H1 (cell line): ENCODE measurements at regions of chr15 and their contacts with region 1.

Region 1: DNA sequence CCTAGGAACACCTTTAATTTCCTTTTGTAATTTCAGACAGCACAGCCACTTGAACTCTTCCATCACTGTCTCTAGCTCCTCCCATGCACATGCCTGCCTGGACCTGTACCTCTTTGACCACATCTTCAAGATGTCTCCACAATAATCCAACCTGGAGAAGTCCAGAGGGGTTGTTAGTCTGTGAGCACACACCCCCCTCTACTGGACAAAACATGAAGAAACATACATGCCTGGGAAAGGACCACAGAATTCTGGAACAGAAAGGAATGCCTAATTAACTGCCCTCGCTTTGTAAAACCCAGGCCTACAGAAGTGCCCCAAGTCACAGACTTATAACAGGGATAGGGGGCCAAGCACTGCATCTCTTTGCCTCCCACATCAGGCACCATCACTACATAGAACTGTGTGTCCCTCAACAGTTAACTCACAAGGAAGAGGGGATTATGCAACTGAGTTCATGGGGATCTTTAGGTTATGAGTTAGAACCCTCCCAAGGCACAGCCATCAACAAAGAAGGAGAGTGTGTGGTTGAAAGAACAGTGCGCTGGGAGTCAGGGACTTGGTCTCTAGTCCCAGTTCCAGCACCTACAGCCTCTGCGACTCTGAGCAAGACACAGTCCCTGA is 61.7 kb downstream of the FMN1 start:
- DNase-seq: peak in 1 of 2 experiments; percentile 27
- H3K4me3 ChIP-seq: no peak overlapping the region
- H3K27ac ChIP-seq: no peak overlapping the region
- H3K4me1 ChIP-seq: no peaks in the 10 kb centered on the region
- H3K27me3 ChIP-seq: no peaks in the 10 kb centered on the region
- CTCF ChIP-seq: peak in 2 of 3 experiments; percentile 74; a peak in 3 of 4 replicates
- EP300 ChIP-seq: no peak
- POLR2A ChIP-seq: no peak
- RAD21 ChIP-seq: peak; percentile 89 to 94

Region 2: GRCh38 chr15:32664796-32665195 is 468.0 kb before region 1 on chr15:
- CTCF ChIA-PET with region 1: interaction called, 14 read pairs
- POLR2A ChIA-PET with region 1: no interaction called
- DNase-seq: no peak
- H3K4me3 ChIP-seq: no peak overlapping the region
- H3K27ac ChIP-seq: no peak overlapping the region
- H3K4me1 ChIP-seq: peaks cover under 1 to 7% (median 3%) of the 10 kb centered on the region in 4 experiments
- H3K27me3 ChIP-seq: no peaks in the 10 kb centered on the region
- CTCF ChIP-seq: no peak
- EP300 ChIP-seq: no peak
- POLR2A ChIP-seq: no peak
- RAD21 ChIP-seq: no peak

Region 3: GRCh38 chr15:33021806-33022389 is 110.9 kb before region 1 on chr15:
- CTCF ChIA-PET with region 1: interaction called, 66 read pairs
- POLR2A ChIA-PET with region 1: no interaction called
- DNase-seq: no peak
- H3K4me3 ChIP-seq: no peak overlapping the region
- H3K27ac ChIP-seq: no peak overlapping the region
- H3K4me1 ChIP-seq: peaks cover 0 to 6% (median 4%) of the 10 kb centered on the region in 4 experiments
- H3K27me3 ChIP-seq: no peaks in the 10 kb centered on the region
- CTCF ChIP-seq: peak in 2 of 3 experiments; percentile 54 to 61; a peak in 2 of 4 replicates
- EP300 ChIP-seq: no peak
- POLR2A ChIP-seq: no peak
- RAD21 ChIP-seq: peak; percentile 63 to 73

Region 4: DNA sequence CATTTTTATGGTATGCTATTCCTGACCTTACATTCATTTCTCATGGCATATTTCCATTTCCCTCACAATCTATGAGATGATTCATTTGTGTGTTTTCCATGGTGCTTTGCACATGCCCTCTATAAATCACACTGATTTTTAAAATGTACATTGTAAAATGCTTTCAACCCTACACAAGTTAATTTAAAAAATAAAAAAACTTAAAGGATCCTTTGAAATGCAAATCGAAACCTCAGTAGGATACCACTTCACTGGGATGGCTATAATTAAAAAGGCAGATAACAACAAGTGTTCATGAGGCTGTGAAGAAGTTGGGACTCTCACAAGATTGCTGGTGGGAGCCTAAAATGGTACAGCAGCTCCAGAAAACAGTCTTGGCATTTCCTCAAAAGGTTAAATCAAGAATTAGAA is 21.8 kb before region 1 on chr15:
- CTCF ChIA-PET with region 1: interaction called, 13 read pairs
- POLR2A ChIA-PET with region 1: no interaction called
- DNase-seq: no peak
- H3K4me3 ChIP-seq: no peak overlapping the region
- H3K27ac ChIP-seq: no peak overlapping the region
- H3K4me1 ChIP-seq: peaks cover 0 to 11% (median 4%) of the 10 kb centered on the region in 4 experiments; a peak in 4 of 7 replicates
- H3K27me3 ChIP-seq: no peaks in the 10 kb centered on the region
- CTCF ChIP-seq: no peak
- EP300 ChIP-seq: no peak
- POLR2A ChIP-seq: no peak
- RAD21 ChIP-seq: no peak

Region 5: DNA sequence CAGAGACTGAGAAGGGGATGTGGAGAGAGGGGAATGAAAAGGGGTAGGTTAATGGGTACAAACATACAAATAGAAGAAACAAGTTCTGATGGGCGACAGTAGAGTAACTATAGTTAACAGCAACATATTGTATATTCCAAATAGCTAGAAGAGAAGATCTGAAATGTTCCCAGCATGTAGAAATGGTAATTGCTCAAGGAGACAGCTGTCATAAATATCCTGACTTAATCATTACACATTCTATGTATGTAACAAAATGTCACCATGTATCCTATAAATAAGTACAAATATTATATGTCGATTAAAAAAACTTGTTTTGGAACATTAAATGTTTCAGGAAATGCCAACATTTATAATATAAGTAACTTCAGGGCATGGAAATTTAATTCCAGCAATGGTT is 38.4 kb after region 1 on chr15:
- CTCF ChIA-PET with region 1: no interaction called
- POLR2A ChIA-PET with region 1: no interaction called
- DNase-seq: no peak
- H3K4me3 ChIP-seq: no peak overlapping the region
- H3K27ac ChIP-seq: no peak overlapping the region
- H3K4me1 ChIP-seq: no peaks in the 10 kb centered on the region
- H3K27me3 ChIP-seq: no peaks in the 10 kb centered on the region
- CTCF ChIP-seq: no peak
- EP300 ChIP-seq: no peak
- POLR2A ChIP-seq: no peak
- RAD21 ChIP-seq: no peak